Thyroid gland (tissue), 4 donors: ENCODE measurements at regions of chr15 and their contacts with region 1.

Region 1: GRCh38 chr15:58761010-58761388 is 10.1 kb upstream of the MINDY2 start:
- DNase-seq: no peak
- H3K4me3 ChIP-seq: no peak overlapping the region
- H3K27ac ChIP-seq: no peak overlapping the region
- H3K4me1 ChIP-seq: no peaks in the 10 kb centered on the region
- H3K27me3 ChIP-seq: no peaks in the 10 kb centered on the region
- CTCF ChIP-seq: no peak
- POLR2A ChIP-seq: no peak

Region 2: GRCh38 chr15:58227706-58228543 is 533.1 kb before region 1 on chr15:
- intact Hi-C with region 1: loop called (anchors 10 kb)
- DNase-seq: peak; percentile 71 to 74
- H3K4me3 ChIP-seq: no peak overlapping the region
- H3K27ac ChIP-seq: no peak overlapping the region
- H3K4me1 ChIP-seq: peaks cover 4 to 5% of the 10 kb centered on the region in 2 donors
- H3K27me3 ChIP-seq: no peaks in the 10 kb centered on the region
- CTCF ChIP-seq: peak; percentile 23 to 82 (median 65)
- POLR2A ChIP-seq: no peak

Region 3: GRCh38 chr15:59013246-59013873 is 252.4 kb after region 1 on chr15:
- intact Hi-C with region 1: no loop called
- DNase-seq: no peak
- H3K4me3 ChIP-seq: no peak overlapping the region
- H3K27ac ChIP-seq: no peak overlapping the region
- H3K4me1 ChIP-seq: peaks cover 5 to 14% of the 10 kb centered on the region in 2 donors
- H3K27me3 ChIP-seq: no peaks in the 10 kb centered on the region
- CTCF ChIP-seq: no peak
- POLR2A ChIP-seq: no peak

Region 4: DNA sequence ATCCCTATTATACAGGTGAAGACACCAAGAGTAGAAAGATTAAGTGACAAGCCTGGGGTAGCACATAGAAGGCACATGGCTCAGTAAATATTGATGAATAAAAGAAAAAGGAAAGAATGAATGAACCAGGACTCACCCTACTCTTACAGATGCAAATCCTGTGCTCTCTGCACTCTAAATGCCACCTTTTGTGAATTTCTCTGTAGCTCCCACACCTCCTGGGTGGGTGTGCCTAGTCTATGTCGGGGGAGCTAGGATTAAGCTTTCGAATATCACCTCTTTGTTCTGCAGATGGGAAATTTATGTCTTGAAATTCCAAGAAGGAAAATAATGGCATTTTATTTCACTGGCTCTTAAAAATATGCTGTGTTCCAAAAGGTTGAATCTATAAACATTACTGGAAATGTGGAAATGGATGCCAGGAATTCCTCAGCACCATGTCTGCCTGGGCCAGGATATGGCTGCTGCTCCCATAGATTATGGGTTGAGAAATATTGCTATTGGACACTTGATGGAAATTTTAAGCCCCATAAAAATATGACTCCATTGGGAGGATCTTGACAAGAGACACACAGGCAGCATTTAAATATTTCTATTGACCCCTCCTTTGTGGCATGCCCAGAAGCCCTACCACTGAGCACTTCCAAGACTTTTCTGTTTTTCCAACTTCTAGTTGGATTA is 387.3 kb after region 1 on chr15:
- intact Hi-C with region 1: no loop called
- DNase-seq: no peak
- H3K4me3 ChIP-seq: no peak overlapping the region
- H3K27ac ChIP-seq: no peak overlapping the region
- H3K4me1 ChIP-seq: peaks cover 0 to 7% of the 10 kb centered on the region in 2 donors
- H3K27me3 ChIP-seq: no peaks in the 10 kb centered on the region
- CTCF ChIP-seq: no peak
- POLR2A ChIP-seq: no peak

Region 5: DNA sequence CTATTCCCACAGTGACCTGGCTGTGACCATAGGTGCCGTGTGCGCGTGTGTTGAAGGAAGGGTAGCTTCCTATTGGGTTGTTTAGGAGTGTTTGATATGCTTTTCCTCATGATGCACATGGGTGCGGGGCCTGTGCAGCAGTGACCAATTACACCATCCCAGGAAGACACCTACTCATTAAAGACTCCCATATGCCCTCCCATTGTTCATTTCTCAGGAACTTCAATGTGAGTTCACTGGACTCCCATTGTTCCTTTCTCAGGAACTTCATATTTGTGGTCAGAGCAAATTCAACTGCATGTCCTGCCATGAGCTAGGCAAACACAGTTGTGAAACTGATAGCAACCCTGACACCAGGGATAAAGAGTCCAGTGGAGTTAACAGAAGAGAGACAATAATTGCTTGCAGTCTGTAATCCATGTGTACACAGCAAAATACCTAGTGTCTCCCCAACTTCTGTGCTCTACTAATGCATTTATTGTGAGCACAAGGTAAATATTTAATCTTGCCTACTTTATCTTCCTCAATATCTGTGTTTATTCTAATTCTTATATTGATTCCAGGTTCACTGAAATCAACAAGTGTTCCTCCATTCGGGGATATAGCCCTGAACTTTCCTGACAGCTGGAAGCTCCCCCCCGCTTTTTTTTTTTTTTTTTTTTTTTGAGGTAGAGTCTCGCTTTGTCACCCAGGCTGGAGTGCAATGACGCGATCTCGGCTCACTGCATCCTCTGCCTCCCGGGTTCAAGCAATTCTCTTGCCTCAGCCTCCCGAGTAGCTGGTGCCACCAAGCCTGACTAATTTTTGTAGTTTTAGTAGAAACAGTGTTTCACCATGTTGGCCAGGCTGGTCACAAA is 793.1 kb after region 1 on chr15:
- intact Hi-C with region 1: no loop called
- DNase-seq: no peak
- H3K4me3 ChIP-seq: no peak overlapping the region
- H3K27ac ChIP-seq: no peak overlapping the region
- H3K4me1 ChIP-seq: no peaks in the 10 kb centered on the region
- H3K27me3 ChIP-seq: no peaks in the 10 kb centered on the region
- CTCF ChIP-seq: no peak
- POLR2A ChIP-seq: no peak